Activated CD4-positive, alpha-beta T cell treated with anti-CD3 and anti-CD28 coated beads, Interleukin-2, amount 10 ng/mL, durations not matched to agents 7 days and 5 days (primary cell): ENCODE measurements at regions of chr6 and their contacts with region 1.

Region 1: GRCh38 chr6:36851149-36851614 is 11.9 kb upstream of the CPNE5 start:
- DNase-seq: peak; percentile 70
- H3K4me3 Mint-ChIP-seq: no peak overlapping the region
- H3K27ac Mint-ChIP-seq: no peak overlapping the region
- H3K4me1 Mint-ChIP-seq: peaks cover 4% of the 10 kb centered on the region
- H3K27me3 Mint-ChIP-seq: no peaks in the 10 kb centered on the region

Region 2: GRCh38 chr6:36862164-36862847 is 11.1 kb after region 1 on chr6:
- CTCF ChIA-PET with region 1: interaction called, 27 read pairs
- POLR2A ChIA-PET with region 1: no interaction called
- DNase-seq: no peak
- H3K4me3 Mint-ChIP-seq: no peak overlapping the region
- H3K27ac Mint-ChIP-seq: peak overlapping the region; percentile 4
- H3K4me1 Mint-ChIP-seq: peaks cover 39% of the 10 kb centered on the region
- H3K27me3 Mint-ChIP-seq: no peaks in the 10 kb centered on the region

Region 3: DNA sequence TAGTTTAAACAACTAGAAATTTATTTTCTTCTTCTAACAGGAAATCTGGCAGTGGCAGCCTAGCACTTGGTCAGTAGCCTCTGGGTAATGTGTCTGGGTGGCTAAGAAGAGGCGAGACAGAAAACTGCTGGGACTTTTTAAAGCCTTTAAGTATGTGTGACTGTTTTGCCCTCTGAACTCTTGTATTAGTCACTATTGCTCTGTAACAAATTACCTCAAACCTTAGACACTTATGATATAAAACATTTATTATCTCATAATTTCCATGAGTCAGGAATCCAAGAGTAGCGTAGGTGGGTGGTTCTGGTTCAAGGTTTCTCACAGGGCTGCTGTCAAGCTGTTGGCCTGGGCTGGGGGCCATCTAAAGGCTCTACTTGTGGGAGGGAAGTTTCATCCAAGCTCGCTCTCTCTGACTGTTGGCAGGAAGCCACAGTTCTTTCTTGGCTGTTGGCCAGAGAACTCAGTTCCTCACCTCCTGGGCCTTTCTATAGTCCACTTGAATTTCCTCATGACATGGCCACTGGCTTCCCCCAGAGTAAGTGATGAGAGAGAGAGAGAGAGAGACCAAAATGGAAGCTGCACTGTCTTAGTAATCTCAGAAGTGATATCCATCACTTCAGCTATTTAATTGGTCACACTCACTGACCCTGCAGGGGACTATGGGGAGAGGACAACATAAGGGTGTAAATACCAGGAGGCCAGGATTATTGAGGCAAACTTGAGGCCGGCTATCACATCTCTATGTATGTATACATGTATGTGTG is 388.9 kb after region 1 on chr6:
- CTCF ChIA-PET with region 1: no interaction called
- POLR2A ChIA-PET with region 1: no interaction called
- DNase-seq: peak; percentile 37
- H3K4me3 Mint-ChIP-seq: no peak overlapping the region
- H3K27ac Mint-ChIP-seq: peak overlapping the region; percentile 15
- H3K4me1 Mint-ChIP-seq: peaks cover 19% of the 10 kb centered on the region
- H3K27me3 Mint-ChIP-seq: no peaks in the 10 kb centered on the region